H1 (cell line): ENCODE measurements at regions of chr7 and their contacts with region 1.

Region 1: DNA sequence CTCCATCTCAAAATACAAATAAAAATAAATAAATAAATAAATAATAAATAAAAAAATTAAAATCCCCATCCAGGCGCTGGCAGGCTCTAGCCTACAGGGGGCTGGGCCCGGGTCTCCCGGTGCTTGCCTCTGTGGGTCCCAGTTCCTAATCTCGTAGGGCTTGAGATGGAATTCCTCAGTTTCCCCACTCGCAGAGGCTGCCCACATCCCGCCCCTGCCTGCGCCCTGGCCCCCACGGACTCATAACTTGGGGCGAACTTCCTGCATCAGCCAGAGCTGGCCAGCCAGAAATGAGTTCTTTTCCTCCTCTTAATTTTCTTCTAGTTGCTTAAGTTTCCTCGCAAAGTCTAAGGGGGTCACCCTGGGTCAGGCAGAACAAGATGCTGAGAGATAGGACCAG is 22.0 kb upstream of the SRRM3 start:
- DNase-seq: no peak
- H3K4me3 ChIP-seq: no peak overlapping the region
- H3K27ac ChIP-seq: no peak overlapping the region
- H3K4me1 ChIP-seq: peaks cover 0 to 3% (median 1%) of the 10 kb centered on the region in 4 experiments; a peak in 3 of 7 replicates
- H3K27me3 ChIP-seq: no peaks in the 10 kb centered on the region
- CTCF ChIP-seq: no peak
- EP300 ChIP-seq: no peak
- POLR2A ChIP-seq: no peak
- RAD21 ChIP-seq: no peak; a peak in 1 of 4 replicates

Region 2: GRCh38 chr7:76166404-76167255 is 13.1 kb before region 1 on chr7:
- CTCF ChIA-PET with region 1: interaction called, 20 read pairs
- POLR2A ChIA-PET with region 1: interaction called, 8 read pairs
- DNase-seq: peak; percentile 87 to 99
- H3K4me3 ChIP-seq: peak overlapping the region; percentile 54 to 69 (median 56)
- H3K27ac ChIP-seq: peak overlapping the region; percentile 87
- H3K4me1 ChIP-seq: peaks cover 2 to 17% (median 9%) of the 10 kb centered on the region in 4 experiments
- H3K27me3 ChIP-seq: no peaks in the 10 kb centered on the region
- CTCF ChIP-seq: no peak
- EP300 ChIP-seq: peak in 1 of 2 experiments; percentile 68; a peak in 1 of 3 replicates
- POLR2A ChIP-seq: peak; percentile 49 to 86
- RAD21 ChIP-seq: peak in 1 of 2 experiments; percentile 14; a peak in 2 of 4 replicates

Region 3: GRCh38 chr7:76211216-76211615 is 31.5 kb after region 1 on chr7:
- CTCF ChIA-PET with region 1: interaction called, 20 read pairs
- POLR2A ChIA-PET with region 1: no interaction called
- DNase-seq: no peak
- H3K4me3 ChIP-seq: no peak overlapping the region
- H3K27ac ChIP-seq: no peak overlapping the region
- H3K4me1 ChIP-seq: no peaks in the 10 kb centered on the region; a peak in 1 of 7 replicates
- H3K27me3 ChIP-seq: no peaks in the 10 kb centered on the region
- CTCF ChIP-seq: no peak
- EP300 ChIP-seq: no peak
- POLR2A ChIP-seq: no peak
- RAD21 ChIP-seq: no peak

Region 4: DNA sequence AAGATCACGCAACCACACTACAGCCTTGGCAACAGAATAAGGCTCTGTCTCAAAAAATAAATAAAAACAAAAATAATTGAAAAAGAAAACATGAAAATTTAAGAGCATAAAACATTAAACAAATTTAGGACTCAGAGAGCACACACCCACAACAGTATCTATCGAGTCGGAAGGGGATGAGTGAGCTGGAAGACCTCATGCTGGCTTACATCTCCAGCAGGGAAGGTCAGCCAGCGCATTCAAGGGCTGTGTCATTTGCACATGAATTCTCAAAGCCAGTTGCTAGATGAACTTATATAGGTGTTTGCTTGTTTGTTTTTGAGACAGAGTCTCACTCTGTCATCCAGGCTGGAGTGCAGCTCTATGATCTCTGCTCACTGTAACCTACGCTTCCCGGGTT is 72.3 kb after region 1 on chr7:
- CTCF ChIA-PET with region 1: interaction called, 15 read pairs
- POLR2A ChIA-PET with region 1: interaction called, 4 read pairs
- DNase-seq: no peak
- H3K4me3 ChIP-seq: no peak overlapping the region
- H3K27ac ChIP-seq: no peak overlapping the region
- H3K4me1 ChIP-seq: peaks cover 1 to 6% (median 3%) of the 10 kb centered on the region in 4 experiments; a peak in 2 of 7 replicates
- H3K27me3 ChIP-seq: no peaks in the 10 kb centered on the region
- CTCF ChIP-seq: no peak
- EP300 ChIP-seq: no peak
- POLR2A ChIP-seq: no peak
- RAD21 ChIP-seq: no peak

Region 5: DNA sequence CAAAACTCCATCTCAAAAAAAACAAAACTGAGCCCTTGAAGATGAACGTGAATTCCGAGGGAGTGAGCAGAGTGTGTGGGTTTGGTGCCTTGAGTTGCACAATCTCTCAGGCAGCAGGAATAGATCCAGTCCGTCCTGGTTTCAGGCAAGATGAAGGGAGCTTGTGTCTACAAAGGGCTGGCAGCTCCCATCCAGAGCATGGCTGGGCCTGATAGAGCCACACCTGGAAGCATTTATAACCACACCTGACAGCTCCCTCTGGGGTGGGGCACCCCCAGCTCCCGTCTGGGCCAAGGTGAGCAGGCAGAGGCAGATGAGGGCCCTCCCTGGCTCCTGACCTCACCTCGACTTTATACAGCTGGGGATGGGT is 117.7 kb after region 1 on chr7:
- CTCF ChIA-PET with region 1: interaction called, 18 read pairs
- POLR2A ChIA-PET with region 1: interaction called, 3 read pairs
- DNase-seq: no peak
- H3K4me3 ChIP-seq: no peak overlapping the region
- H3K27ac ChIP-seq: no peak overlapping the region
- H3K4me1 ChIP-seq: peaks cover 0 to 6% (median 4%) of the 10 kb centered on the region in 4 experiments; a peak in 5 of 7 replicates
- H3K27me3 ChIP-seq: peaks cover 0 to 6% (median 4%) of the 10 kb centered on the region in 4 experiments; a peak in 3 of 7 replicates
- CTCF ChIP-seq: no peak
- EP300 ChIP-seq: no peak
- POLR2A ChIP-seq: no peak
- RAD21 ChIP-seq: no peak

Region 6: GRCh38 chr7:76346778-76347177 is 167.1 kb after region 1 on chr7:
- CTCF ChIA-PET with region 1: no interaction called
- POLR2A ChIA-PET with region 1: no interaction called
- DNase-seq: no peak
- H3K4me3 ChIP-seq: no peak overlapping the region
- H3K27ac ChIP-seq: no peak overlapping the region
- H3K4me1 ChIP-seq: 0 out of 7 replicates have a peak, but pooled peaks cover 0 to 2% (median 0%) of the 10 kb centered on the region in 4 experiments
- H3K27me3 ChIP-seq: no peaks in the 10 kb centered on the region
- CTCF ChIP-seq: no peak
- EP300 ChIP-seq: no peak
- POLR2A ChIP-seq: no peak
- RAD21 ChIP-seq: no peak